ENCODE measurements at regions of chr12 and their contacts with region 1.

Region 1: GRCh38 chr12:76020731-76021672 is 10.6 kb downstream of the PHLDA1 start:
- DNase-seq: peak; percentile 97
- H3K4me3 ChIP-seq: peak overlapping the region; percentile 41
- H3K27ac ChIP-seq: peak overlapping the region; percentile 98
- H3K4me1 ChIP-seq: peaks cover 51% of the 10 kb centered on the region
- H3K27me3 ChIP-seq: no peaks in the 10 kb centered on the region

Region 2: DNA sequence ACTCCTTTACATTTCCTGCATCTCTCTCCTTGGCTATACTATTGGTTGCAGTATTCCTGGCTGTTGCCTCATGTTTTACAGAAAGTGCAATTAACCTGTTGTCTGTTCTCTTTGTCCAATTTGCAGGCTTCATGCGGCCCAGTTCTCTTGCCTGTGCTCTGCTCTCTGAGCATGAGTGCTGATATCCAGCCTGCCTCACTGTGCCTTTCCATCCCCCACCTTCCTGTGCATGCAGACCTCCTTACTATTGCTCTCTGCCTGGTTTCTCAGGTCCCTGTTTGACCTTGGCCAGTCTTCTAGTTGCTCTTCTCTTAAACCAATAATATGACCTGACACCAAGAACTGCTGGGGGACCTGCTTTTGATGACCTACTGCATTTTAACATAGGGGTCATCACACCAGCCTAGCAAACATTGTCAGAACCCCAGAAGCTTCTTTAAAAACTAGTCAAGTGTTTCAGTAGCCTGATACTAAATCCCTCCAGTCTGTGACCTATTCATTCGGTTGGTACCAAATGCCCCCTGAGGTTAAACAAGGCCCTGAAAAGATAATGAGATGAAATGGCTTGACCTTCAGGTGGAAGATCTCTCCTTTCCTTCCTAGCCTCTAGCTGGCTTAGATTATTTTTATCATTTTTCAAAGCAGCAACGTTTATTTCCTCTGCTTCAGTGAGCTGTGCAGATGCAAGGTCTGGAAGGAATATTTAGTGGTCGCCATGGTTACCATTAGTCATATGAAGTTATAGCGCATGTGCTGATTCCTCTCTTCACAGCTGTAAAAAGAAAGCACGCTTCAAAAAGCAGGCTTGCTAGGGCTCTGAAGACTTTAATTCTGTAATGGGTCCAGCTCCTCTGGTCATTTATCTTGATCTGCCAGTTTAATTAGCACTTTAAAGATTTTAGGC is 205.9 kb before region 1 on chr12:
- in situ Hi-C with region 1: loop called (anchors 10 kb)
- DNase-seq: peak; percentile 96
- H3K4me3 ChIP-seq: 0 out of 2 replicates have a peak overlapping the region, but pooled peaks have one; percentile 6
- H3K27ac ChIP-seq: peak overlapping the region; percentile 61
- H3K4me1 ChIP-seq: peaks cover 62% of the 10 kb centered on the region
- H3K27me3 ChIP-seq: no peaks in the 10 kb centered on the region

Region 3: GRCh38 chr12:76804435-76804976 is 783.5 kb after region 1 on chr12:
- in situ Hi-C with region 1: no loop called
- DNase-seq: no peak
- H3K4me3 ChIP-seq: no peak overlapping the region
- H3K27ac ChIP-seq: no peak overlapping the region
- H3K4me1 ChIP-seq: no peaks in the 10 kb centered on the region
- H3K27me3 ChIP-seq: no peaks in the 10 kb centered on the region

Measured in GM23248 (cell line).